ENCODE measurements at regions of chr10 and their contacts with region 1.

Region 1: DNA sequence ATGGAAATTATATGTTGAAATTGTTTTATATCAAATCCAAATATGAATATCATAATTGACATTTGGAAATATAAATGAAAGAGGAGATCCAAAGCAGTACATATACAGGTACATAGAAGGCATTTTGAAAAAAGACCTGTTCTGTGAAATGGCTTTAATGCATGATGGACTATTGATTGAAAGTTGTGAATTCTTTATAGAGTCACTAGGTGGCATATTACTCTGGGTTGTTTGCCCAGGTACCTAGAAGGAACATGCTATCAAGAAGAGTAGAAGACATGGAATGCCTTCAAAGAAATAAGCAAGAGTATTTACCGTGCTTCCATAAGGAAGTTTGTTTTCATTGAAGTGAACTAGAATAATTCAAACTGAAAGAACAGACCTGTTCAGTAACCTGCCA is 160.0 kb upstream of the ANK3 start:
- DNase-seq: no peak
- H3K4me3 ChIP-seq: no peak overlapping the region
- H3K27ac ChIP-seq: no peak overlapping the region
- H3K4me1 ChIP-seq: no peaks in the 10 kb centered on the region
- H3K27me3 ChIP-seq: no peaks in the 10 kb centered on the region
- CTCF ChIP-seq: peak; percentile 63

Region 2: GRCh38 chr10:60230892-60231291 is 318.8 kb before region 1 on chr10:
- CTCF ChIA-PET with region 1: no interaction called
- POLR2A ChIA-PET with region 1: no interaction called
- intact Hi-C with region 1: no loop called
- DNase-seq: no peak
- H3K4me3 ChIP-seq: no peak overlapping the region
- H3K27ac ChIP-seq: no peak overlapping the region
- H3K4me1 ChIP-seq: no peaks in the 10 kb centered on the region
- H3K27me3 ChIP-seq: no peaks in the 10 kb centered on the region
- CTCF ChIP-seq: no peak

Region 3: DNA sequence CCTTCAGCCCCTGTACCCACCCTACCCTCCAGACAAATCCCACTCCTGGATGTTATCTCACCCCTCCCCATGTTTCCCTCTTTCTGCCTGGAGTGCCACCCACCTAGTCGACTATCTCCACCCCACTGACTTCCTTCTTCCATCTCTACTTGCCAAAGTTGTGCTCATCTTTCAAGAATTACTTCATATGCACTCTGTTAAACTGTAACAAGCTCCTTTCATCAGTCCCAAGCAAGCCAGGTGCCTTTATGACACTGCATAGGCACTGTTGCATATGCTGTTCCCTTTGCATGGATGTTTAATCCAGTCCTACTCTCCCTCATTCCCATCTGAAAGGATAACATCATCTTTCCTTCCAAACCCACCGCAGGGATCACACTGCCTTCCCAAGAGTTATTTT is 219.7 kb after region 1 on chr10:
- CTCF ChIA-PET with region 1: no interaction called
- POLR2A ChIA-PET with region 1: no interaction called
- intact Hi-C with region 1: loop called (anchors 5 kb)
- DNase-seq: no peak
- H3K4me3 ChIP-seq: no peak overlapping the region
- H3K27ac ChIP-seq: no peak overlapping the region
- H3K4me1 ChIP-seq: no peaks in the 10 kb centered on the region
- H3K27me3 ChIP-seq: no peaks in the 10 kb centered on the region
- CTCF ChIP-seq: no peak

Measured in PC-9 (cell line).